ENCODE measurements at regions of chr1 and their contacts with region 1.

Region 1: GRCh38 chr1:163071405-163072255 is 2.5 kb downstream of the RGS4 start:
- DNase-seq: peak; percentile 46
- H3K4me3 ChIP-seq: no peak overlapping the region
- H3K27ac ChIP-seq: peak overlapping the region in 2 of 4 donors; percentile 8 to 36
- H3K4me1 ChIP-seq: no peaks in the 10 kb centered on the region
- H3K27me3 ChIP-seq: peaks cover 36% of the 10 kb centered on the region
- CTCF ChIP-seq: peak; percentile 42 to 55 (median 50)
- EP300 ChIP-seq: no peak
- POLR2A ChIP-seq: no peak

Region 2: GRCh38 chr1:163278602-163279001 is 207.0 kb after region 1 on chr1:
- in situ Hi-C with region 1: no loop called
- intact Hi-C with region 1: no loop called
- DNase-seq: no peak
- H3K4me3 ChIP-seq: no peak overlapping the region
- H3K27ac ChIP-seq: no peak overlapping the region
- H3K4me1 ChIP-seq: no peaks in the 10 kb centered on the region
- H3K27me3 ChIP-seq: no peaks in the 10 kb centered on the region
- CTCF ChIP-seq: no peak
- EP300 ChIP-seq: no peak
- POLR2A ChIP-seq: no peak

Region 3: DNA sequence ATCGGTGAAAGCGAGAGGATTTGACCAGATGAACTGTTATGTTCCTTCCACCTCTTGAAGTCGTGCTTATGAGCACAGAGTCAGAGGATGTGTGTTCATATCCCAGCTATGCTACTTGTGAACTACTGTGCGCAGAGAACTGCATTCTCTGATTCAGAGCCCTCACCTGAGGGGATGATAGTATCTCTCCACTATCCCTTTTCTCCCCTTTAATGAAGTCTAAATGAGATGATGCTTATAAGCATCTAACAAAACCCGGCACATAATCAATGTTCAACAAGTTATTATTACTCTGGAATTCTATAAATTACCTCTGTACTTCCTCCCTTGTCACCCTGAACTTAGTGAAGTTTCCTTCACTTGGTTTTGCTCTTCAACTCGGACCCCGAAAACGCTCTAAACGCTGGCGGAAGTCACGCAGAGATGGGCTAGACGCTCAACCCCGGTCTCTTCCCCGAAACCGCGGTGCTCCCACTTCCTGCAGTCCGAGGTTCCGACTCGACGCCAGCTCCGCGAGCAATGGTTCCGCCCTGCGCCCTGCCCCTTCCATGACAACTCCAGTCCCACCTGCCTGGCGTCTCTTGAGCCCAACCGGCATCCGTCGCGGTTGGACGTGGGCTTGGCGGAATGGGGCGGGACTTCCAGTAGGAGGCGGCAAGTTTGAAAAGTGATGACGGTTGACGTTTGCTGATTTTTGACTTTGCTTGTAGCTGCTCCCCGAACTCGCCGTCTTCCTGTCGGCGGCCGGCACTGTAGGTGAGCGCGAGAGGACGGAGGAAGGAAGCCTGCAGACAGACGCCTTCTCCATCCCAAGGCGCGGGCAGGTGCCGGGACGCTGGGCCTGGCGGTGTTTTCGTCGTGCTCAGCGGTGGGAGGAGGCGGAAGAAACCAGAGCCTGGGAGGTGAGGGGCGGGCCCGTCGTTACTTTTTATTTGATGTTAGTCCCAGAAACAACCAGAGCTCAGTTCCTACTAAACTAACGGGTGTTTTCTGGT is 250.0 kb after region 1 on chr1 and contains the start of gene NUF2:
- in situ Hi-C with region 1: loop called in 2 of 4 experiments (anchors 25 kb)
- intact Hi-C with region 1: no loop called
- DNase-seq: peak; percentile 98
- H3K4me3 ChIP-seq: peak within 1 kb of the TSS; percentile 55 to 87 (median 71)
- H3K27ac ChIP-seq: peak within 1 kb of the TSS; percentile 79 to 83 (median 81)
- H3K4me1 ChIP-seq: peaks cover 0 to 14% (median 13%) of the 10 kb centered on the region in 4 donors
- H3K27me3 ChIP-seq: no peaks in the 10 kb centered on the region
- CTCF ChIP-seq: no peak
- EP300 ChIP-seq: no peak
- POLR2A ChIP-seq: no peak
- total RNA-seq, gene NUF2: 1.1 to 28.5 TPM in 2 of 4 donors, not detected in the others